T-cell (primary cell): ENCODE measurements at regions of chr13 and their contacts with region 1.

Region 1: GRCh38 chr13:40682449-40683240 is 16.2 kb upstream of the FOXO1 start:
- DNase-seq: peak in 2 of 35 experiments; percentile 17 to 49
- ATAC-seq: peak in 1 of 4 experiments; percentile 68
- H3K4me3 ChIP-seq: no peak overlapping the region
- H3K4me3 Mint-ChIP-seq: peak overlapping the region in 1 of 3 donors; percentile 3
- H3K27ac ChIP-seq: no peak overlapping the region
- H3K27ac Mint-ChIP-seq: no peak overlapping the region
- H3K4me1 ChIP-seq: peaks cover 0 to 9% of the 10 kb centered on the region in 2 experiments
- H3K4me1 Mint-ChIP-seq: peaks cover 13 to 17% (median 13%) of the 10 kb centered on the region in 3 donors
- H3K27me3 ChIP-seq: no peaks in the 10 kb centered on the region
- H3K27me3 Mint-ChIP-seq: no peaks in the 10 kb centered on the region

Region 2: DNA sequence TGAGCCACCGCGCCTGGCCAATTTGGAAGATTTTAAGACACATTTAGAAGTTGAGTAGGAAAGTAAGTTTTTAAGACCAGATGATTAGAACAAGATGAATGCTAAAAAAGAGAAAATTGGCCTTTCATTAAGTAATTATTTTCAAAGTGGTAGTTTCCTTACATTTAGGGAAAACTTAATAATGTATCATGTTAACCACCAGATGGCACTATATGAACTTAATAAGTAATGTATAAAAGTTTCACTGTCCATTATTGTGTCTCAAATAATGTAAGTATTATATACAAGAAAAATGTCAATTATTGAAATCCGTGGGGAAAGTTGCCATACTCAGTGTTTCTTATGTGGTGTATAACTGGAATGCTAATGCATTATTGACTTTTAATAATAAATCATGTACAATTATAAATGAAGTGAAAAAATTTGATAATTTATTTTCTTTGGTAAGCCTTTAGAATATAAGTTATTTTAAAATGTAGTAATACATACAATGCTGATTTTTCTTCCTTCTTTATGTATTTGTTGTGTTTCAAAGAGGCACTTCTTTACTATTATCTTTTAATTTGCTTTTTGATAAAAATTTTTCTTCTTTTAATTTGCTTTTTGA is 998.0 kb before region 1 on chr13:
- CTCF ChIA-PET with region 1: interaction called, 12 to 15 read pairs
- POLR2A ChIA-PET with region 1: no interaction called
- DNase-seq: peak in 1 of 35 experiments; percentile 44
- ATAC-seq: no peak
- H3K4me3 ChIP-seq: no peak overlapping the region
- H3K4me3 Mint-ChIP-seq: no peak overlapping the region
- H3K27ac ChIP-seq: no peak overlapping the region
- H3K27ac Mint-ChIP-seq: no peak overlapping the region
- H3K4me1 ChIP-seq: no peaks in the 10 kb centered on the region
- H3K4me1 Mint-ChIP-seq: peaks cover 5 to 16% (median 8%) of the 10 kb centered on the region in 3 donors
- H3K27me3 ChIP-seq: no peaks in the 10 kb centered on the region
- H3K27me3 Mint-ChIP-seq: no peaks in the 10 kb centered on the region

Region 3: DNA sequence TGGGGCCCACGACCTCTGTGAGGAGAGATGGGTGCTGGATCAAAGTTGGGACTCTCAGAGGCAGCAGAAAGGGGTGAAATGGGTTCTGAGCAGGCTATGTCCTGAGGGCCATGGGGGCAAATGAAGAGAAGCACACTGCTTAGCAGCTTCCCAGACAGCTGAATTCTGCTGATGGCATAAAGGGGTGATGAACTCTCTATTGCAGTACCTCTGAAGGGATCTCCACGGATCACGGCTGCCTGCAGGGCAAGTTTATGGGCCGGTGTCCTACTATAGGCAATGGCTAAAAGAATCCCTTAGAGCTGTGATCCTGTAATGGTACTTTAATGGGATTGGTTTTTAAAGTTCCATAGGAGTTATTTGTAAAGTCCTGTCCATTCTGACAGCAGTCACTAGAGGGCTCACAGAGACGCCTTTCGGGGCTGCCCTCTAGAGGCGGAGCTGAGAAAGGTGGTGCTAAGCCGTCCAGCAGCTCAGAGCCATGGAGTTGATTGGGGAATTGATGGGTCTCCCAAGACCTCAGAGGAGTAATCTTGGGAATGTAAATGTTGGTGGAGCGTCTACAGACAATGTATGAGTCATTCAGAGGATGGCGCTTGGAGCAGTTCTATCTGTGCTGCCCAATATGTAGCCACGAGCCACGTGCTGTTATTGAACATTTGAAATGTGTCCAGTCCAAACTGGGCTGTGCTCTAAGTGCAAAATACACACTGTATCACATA is 739.9 kb before region 1 on chr13:
- CTCF ChIA-PET with region 1: interaction called, 9 to 10 read pairs
- POLR2A ChIA-PET with region 1: no interaction called
- DNase-seq: peak; percentile 28 to 80 (median 58)
- ATAC-seq: peak; percentile 97 to 99 (median 98)
- H3K4me3 ChIP-seq: no peak overlapping the region
- H3K4me3 Mint-ChIP-seq: no peak overlapping the region
- H3K27ac ChIP-seq: no peak overlapping the region
- H3K27ac Mint-ChIP-seq: no peak overlapping the region
- H3K4me1 ChIP-seq: peaks cover 3% of the 10 kb centered on the region in 2 experiments
- H3K4me1 Mint-ChIP-seq: peaks cover 8 to 19% (median 8%) of the 10 kb centered on the region in 3 donors
- H3K27me3 ChIP-seq: peaks cover 0 to 6% of the 10 kb centered on the region in 2 experiments
- H3K27me3 Mint-ChIP-seq: no peaks in the 10 kb centered on the region

Region 4: DNA sequence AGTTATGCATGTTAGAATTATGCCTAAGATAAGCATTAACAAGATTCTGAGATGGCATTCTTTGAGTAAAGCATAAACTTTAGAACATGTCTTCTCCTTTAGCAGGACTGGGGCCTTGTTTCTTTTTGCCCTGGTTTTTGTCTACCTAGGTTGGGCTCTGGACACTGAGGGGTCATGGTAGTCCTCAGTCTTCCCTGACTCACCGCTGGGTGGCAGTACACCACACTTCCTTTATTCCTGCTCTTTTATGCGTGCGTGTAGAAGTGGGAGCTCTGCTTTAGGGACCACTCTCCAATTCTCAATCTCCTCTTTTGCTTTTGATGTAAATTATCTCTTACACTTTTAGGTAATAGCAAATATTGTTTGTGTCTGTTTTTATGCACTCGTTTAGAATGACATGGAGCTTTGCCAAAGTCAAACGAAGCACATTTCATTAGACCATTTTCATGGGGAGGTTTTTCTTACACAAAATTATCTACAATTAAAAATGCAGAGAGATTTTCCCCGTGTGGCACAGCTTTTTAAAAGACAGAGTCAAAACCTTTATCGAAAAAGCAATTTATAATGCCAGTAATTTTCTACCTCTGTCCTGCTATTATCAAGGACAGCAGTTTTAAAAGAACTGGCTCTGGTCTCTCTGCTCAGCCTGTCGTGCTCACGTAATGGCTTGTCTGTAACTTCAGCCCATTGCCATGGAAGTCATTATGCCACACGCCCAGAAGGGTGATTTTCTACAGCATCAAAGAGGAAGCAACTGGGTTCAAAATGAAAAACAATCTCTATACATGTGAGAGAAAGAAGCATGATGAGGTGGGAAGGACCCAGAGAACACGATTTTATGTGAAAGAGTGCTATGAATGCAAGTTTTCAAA is 613.2 kb before region 1 on chr13:
- CTCF ChIA-PET with region 1: interaction called, 7 to 25 read pairs
- POLR2A ChIA-PET with region 1: no interaction called
- DNase-seq: peak; percentile 25 to 86 (median 64)
- ATAC-seq: peak; percentile 75 to 95 (median 90)
- H3K4me3 ChIP-seq: no peak overlapping the region
- H3K4me3 Mint-ChIP-seq: peak overlapping the region; percentile 34 to 66 (median 40)
- H3K27ac ChIP-seq: no peak overlapping the region
- H3K27ac Mint-ChIP-seq: peak overlapping the region; percentile 60 to 77
- H3K4me1 ChIP-seq: peaks cover 14 to 18% of the 10 kb centered on the region in 2 experiments
- H3K4me1 Mint-ChIP-seq: peaks cover 24 to 29% (median 27%) of the 10 kb centered on the region in 3 donors
- H3K27me3 ChIP-seq: peaks cover 0 to 3% of the 10 kb centered on the region in 2 experiments
- H3K27me3 Mint-ChIP-seq: no peaks in the 10 kb centered on the region

Region 5: GRCh38 chr13:40247845-40248244 is 434.8 kb before region 1 on chr13:
- CTCF ChIA-PET with region 1: no interaction called
- POLR2A ChIA-PET with region 1: no interaction called
- DNase-seq: no peak
- ATAC-seq: no peak
- H3K4me3 ChIP-seq: no peak overlapping the region
- H3K4me3 Mint-ChIP-seq: no peak overlapping the region
- H3K27ac ChIP-seq: no peak overlapping the region
- H3K27ac Mint-ChIP-seq: no peak overlapping the region
- H3K4me1 ChIP-seq: no peaks in the 10 kb centered on the region
- H3K4me1 Mint-ChIP-seq: peaks cover 19 to 28% (median 22%) of the 10 kb centered on the region in 3 donors
- H3K27me3 ChIP-seq: no peaks in the 10 kb centered on the region
- H3K27me3 Mint-ChIP-seq: no peaks in the 10 kb centered on the region

Region 6: GRCh38 chr13:40664100-40664998 is 18.3 kb before region 1 on chr13:
- CTCF ChIA-PET with region 1: interaction called, 11 to 20 read pairs
- POLR2A ChIA-PET with region 1: no interaction called
- DNase-seq: peak; percentile 45 to 80 (median 66)
- ATAC-seq: peak; percentile 35 to 44 (median 38)
- H3K4me3 ChIP-seq: peak overlapping the region; percentile 71 to 96
- H3K4me3 Mint-ChIP-seq: peak overlapping the region; percentile 90 to 98 (median 96)
- H3K27ac ChIP-seq: peak overlapping the region; percentile 84
- H3K27ac Mint-ChIP-seq: peak overlapping the region; percentile 94 to 95
- H3K4me1 ChIP-seq: peaks cover 35 to 38% of the 10 kb centered on the region in 2 experiments
- H3K4me1 Mint-ChIP-seq: peaks cover 48 to 62% (median 56%) of the 10 kb centered on the region in 3 donors
- H3K27me3 ChIP-seq: no peaks in the 10 kb centered on the region
- H3K27me3 Mint-ChIP-seq: no peaks in the 10 kb centered on the region

Region 7: GRCh38 chr13:40671956-40672764 is 10.5 kb before region 1 on chr13:
- CTCF ChIA-PET with region 1: interaction called, 11 to 20 read pairs
- POLR2A ChIA-PET with region 1: interaction called in 1 of 2 experiments, 4 read pairs
- DNase-seq: no peak
- ATAC-seq: no peak
- H3K4me3 ChIP-seq: no peak overlapping the region
- H3K4me3 Mint-ChIP-seq: no peak overlapping the region
- H3K27ac ChIP-seq: no peak overlapping the region
- H3K27ac Mint-ChIP-seq: peak overlapping the region in 1 of 2 donors; percentile 10
- H3K4me1 ChIP-seq: peaks cover 6 to 13% of the 10 kb centered on the region in 2 experiments
- H3K4me1 Mint-ChIP-seq: peaks cover 13 to 40% (median 36%) of the 10 kb centered on the region in 3 donors
- H3K27me3 ChIP-seq: no peaks in the 10 kb centered on the region
- H3K27me3 Mint-ChIP-seq: no peaks in the 10 kb centered on the region

Region 8: DNA sequence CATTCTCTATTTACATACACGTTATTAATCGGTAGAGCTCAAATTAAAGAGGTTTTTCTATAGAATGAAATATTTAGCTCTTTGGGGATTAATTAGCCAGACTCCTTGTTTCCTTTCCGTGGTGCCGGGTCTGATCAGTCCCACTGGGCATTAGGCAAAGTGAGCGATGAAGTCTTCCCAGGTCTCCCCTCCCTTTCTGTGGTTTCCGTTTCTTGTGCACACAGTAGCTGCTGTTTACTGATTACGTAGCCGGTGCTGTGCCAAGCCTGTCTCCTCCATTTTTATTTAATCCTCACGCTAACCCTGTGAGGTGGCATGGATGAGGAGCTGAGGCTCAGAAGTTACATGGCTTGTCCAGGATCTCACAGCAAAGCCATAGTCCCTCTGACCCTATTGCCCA is 115.7 kb after region 1 on chr13:
- CTCF ChIA-PET with region 1: no interaction called
- POLR2A ChIA-PET with region 1: no interaction called
- DNase-seq: peak in 9 of 35 experiments; percentile 6 to 48 (median 13)
- ATAC-seq: peak; percentile 48 to 81 (median 70)
- H3K4me3 ChIP-seq: peak overlapping the region in 1 of 2 donors; percentile 19
- H3K4me3 Mint-ChIP-seq: peak overlapping the region; percentile 53 to 64 (median 59)
- H3K27ac ChIP-seq: peak overlapping the region; percentile 44
- H3K27ac Mint-ChIP-seq: peak overlapping the region; percentile 78 to 91
- H3K4me1 ChIP-seq: peaks cover 0 to 6% of the 10 kb centered on the region in 2 experiments
- H3K4me1 Mint-ChIP-seq: peaks cover 9 to 18% (median 18%) of the 10 kb centered on the region in 3 donors
- H3K27me3 ChIP-seq: no peaks in the 10 kb centered on the region
- H3K27me3 Mint-ChIP-seq: no peaks in the 10 kb centered on the region